Common myeloid progenitor, CD34-positive (primary cell): ENCODE measurements at regions of chr5 and their contacts with region 1.

Region 1: DNA sequence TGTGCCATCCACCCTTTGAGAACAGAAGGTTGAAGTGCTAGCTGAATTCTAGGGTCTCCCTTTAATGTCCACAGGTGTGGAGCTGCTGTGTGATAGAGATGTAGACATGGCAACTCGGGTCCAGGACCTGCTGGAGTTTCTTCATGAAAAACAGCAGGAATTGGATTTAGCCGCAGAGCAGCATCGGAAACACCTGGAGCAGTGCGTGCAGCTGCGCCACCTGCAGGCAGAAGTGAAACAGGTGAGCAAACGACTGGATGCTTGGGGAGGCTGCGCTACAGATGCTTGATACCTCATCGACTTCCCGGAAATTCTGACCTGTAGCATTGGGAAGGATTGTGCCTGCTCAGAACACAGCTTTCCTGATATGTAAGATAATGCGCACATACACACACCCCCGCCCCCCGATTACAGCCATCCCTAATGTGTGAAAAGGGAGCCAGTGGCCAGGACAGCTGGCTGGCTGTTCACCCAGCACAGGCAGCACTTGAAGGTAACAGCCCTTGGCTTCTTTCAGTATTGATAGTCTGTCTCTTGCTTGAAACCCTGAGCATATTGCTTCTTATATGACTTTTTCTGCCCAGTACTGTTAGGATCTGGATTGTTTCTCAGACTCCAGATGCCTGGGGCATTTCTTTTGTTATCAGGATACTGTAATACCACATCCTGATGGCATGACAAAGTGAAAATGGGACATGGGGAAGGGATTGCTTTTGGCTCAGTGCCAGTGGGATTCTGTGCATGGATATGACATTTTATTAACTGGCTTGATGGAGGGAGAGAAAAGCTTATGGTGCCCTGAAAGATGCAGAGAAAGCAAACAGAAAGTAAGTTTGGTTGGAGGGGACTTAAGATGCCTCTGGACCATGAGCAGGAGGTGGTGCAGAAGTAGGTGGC is 216.8 kb upstream of the OTULINL start:
- DNase-seq: no peak
- H3K4me3 ChIP-seq: no peak overlapping the region
- H3K27ac ChIP-seq: no peak overlapping the region
- H3K4me1 ChIP-seq: peaks cover 0 to 11% (median 3%) of the 10 kb centered on the region in 4 experiments
- H3K27me3 ChIP-seq: no peaks in the 10 kb centered on the region

Region 2: GRCh38 chr5:14326035-14326903 is 38.6 kb before region 1 on chr5:
- CTCF ChIA-PET with region 1: interaction called, 20 read pairs
- POLR2A ChIA-PET with region 1: no interaction called
- DNase-seq: peak in 2 of 3 donors; percentile 15 to 17
- H3K4me3 ChIP-seq: no peak overlapping the region
- H3K27ac ChIP-seq: no peak overlapping the region
- H3K4me1 ChIP-seq: peaks cover 8 to 15% (median 8%) of the 10 kb centered on the region in 4 experiments
- H3K27me3 ChIP-seq: no peaks in the 10 kb centered on the region

Region 3: GRCh38 chr5:14351845-14352712 is 12.7 kb before region 1 on chr5:
- CTCF ChIA-PET with region 1: interaction called, 19 read pairs
- POLR2A ChIA-PET with region 1: no interaction called
- DNase-seq: peak; percentile 52 to 72 (median 67)
- H3K4me3 ChIP-seq: no peak overlapping the region
- H3K27ac ChIP-seq: no peak overlapping the region
- H3K4me1 ChIP-seq: peaks cover 0 to 18% (median 12%) of the 10 kb centered on the region in 4 experiments
- H3K27me3 ChIP-seq: no peaks in the 10 kb centered on the region

Region 4: GRCh38 chr5:14386884-14387624 is 22.2 kb after region 1 on chr5:
- CTCF ChIA-PET with region 1: interaction called, 13 read pairs
- POLR2A ChIA-PET with region 1: no interaction called
- DNase-seq: no peak
- H3K4me3 ChIP-seq: no peak overlapping the region
- H3K27ac ChIP-seq: no peak overlapping the region
- H3K4me1 ChIP-seq: no peaks in the 10 kb centered on the region
- H3K27me3 ChIP-seq: no peaks in the 10 kb centered on the region

Region 5: DNA sequence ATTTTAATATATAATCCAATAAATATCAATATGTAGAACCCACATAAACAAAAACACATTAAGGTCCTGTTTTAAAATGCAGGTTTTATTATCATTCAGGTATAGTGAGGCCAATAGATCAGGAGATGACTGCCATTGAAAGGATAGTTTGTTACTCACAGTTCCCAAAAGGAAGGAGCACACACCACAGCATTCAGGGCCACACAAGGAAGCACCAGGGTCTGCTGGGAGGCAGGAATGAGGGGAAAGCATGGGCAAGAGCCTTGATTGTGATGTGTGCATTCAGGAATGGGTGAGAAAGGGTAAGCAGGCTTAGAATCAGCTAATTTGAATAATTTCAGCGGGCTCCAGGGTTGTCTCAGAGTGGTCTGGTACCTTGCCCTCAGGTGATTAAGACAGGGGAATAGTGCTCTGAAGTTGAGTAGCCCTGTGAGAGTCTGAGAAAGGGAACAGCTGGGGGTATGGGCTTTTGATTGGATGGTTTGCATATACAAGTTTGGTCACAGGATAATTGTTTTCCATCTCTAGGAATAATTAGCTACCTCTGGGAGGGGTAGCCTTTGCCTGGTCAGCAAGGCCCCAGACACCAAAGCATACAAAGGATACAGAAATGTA is 279.9 kb after region 1 on chr5:
- CTCF ChIA-PET with region 1: interaction called, 53 read pairs
- POLR2A ChIA-PET with region 1: no interaction called
- DNase-seq: no peak
- H3K4me3 ChIP-seq: no peak overlapping the region
- H3K27ac ChIP-seq: no peak overlapping the region
- H3K4me1 ChIP-seq: no peaks in the 10 kb centered on the region
- H3K27me3 ChIP-seq: peaks cover 0 to 1% (median 0%) of the 10 kb centered on the region in 5 experiments

Region 6: DNA sequence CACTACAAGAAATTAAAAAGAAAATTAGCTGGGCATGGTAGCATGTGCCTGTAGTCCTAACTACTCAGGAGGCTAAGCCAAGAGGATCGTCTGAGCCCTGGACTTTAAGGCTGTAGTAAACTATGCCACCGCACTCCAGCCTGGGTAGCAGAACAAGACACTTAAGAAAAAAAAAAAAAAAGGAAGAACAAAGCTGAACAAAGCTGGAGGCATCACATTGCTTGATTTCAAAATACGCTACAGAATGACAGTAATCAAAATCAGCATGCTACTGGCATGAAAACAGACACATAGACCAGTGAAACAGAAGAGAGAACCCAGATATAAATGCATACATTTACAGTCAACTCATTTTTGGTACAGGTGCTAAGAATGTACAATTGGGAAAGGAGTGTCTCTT is 285.2 kb after region 1 on chr5:
- CTCF ChIA-PET with region 1: interaction called, 53 read pairs
- POLR2A ChIA-PET with region 1: no interaction called
- DNase-seq: no peak
- H3K4me3 ChIP-seq: no peak overlapping the region
- H3K27ac ChIP-seq: no peak overlapping the region
- H3K4me1 ChIP-seq: no peaks in the 10 kb centered on the region
- H3K27me3 ChIP-seq: peaks cover 0 to 2% (median 0%) of the 10 kb centered on the region in 5 experiments